ENCODE measurements at regions of chr2 and their contacts with region 1.

Region 1: GRCh38 chr2:105235388-105236054 is 6.0 kb upstream of the GPR45 start:
- DNase-seq: peak; percentile 73

Region 2: GRCh38 chr2:105114551-105114950 is 121.0 kb before region 1 on chr2:
- in situ Hi-C with region 1: loop called (anchors 10 kb)
- DNase-seq: peak; percentile 49